ENCODE measurements at regions of chr5 and their contacts with region 1.

Region 1: DNA sequence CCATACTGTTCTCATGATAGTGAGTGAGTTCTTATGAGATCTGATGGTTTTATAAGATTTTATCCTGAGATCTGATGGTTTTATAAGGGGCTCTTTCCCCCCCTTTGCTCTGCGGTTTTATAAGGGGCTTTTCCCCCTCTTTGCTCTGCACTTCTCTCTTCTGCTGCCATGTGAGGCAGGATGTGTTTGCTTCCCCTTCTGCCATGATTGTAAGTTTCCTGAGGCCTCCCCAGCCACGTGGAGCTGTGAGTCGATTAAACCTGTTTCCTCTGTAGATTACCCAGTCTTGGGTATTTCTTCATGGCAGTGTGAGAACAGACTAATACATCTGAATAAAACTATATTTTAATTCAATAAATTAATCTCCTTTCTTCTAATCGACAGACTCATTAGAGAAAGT is 64.9 kb upstream of the ZSWIM6 start:
- DNase-seq: no peak
- H3K4me3 ChIP-seq: no peak overlapping the region
- H3K4me3 Mint-ChIP-seq: no peak overlapping the region
- H3K27ac ChIP-seq: no peak overlapping the region
- H3K27ac Mint-ChIP-seq: no peak overlapping the region
- H3K4me1 ChIP-seq: peaks cover 9% of the 10 kb centered on the region
- H3K4me1 Mint-ChIP-seq: peaks cover 14 to 20% (median 16%) of the 10 kb centered on the region in 4 donors
- H3K27me3 ChIP-seq: no peaks in the 10 kb centered on the region
- H3K27me3 Mint-ChIP-seq: peaks cover 9 to 12% of the 10 kb centered on the region in 2 donors

Region 2: GRCh38 chr5:60820593-60821487 is 446.3 kb before region 1 on chr5:
- CTCF ChIA-PET with region 1: no interaction called
- POLR2A ChIA-PET with region 1: no interaction called
- intact Hi-C with region 1: no loop called
- DNase-seq: no peak
- H3K4me3 ChIP-seq: no peak overlapping the region
- H3K4me3 Mint-ChIP-seq: no peak overlapping the region
- H3K27ac ChIP-seq: no peak overlapping the region
- H3K27ac Mint-ChIP-seq: no peak overlapping the region
- H3K4me1 ChIP-seq: no peaks in the 10 kb centered on the region
- H3K4me1 Mint-ChIP-seq: no peaks in the 10 kb centered on the region
- H3K27me3 ChIP-seq: no peaks in the 10 kb centered on the region
- H3K27me3 Mint-ChIP-seq: no peaks in the 10 kb centered on the region

Region 3: DNA sequence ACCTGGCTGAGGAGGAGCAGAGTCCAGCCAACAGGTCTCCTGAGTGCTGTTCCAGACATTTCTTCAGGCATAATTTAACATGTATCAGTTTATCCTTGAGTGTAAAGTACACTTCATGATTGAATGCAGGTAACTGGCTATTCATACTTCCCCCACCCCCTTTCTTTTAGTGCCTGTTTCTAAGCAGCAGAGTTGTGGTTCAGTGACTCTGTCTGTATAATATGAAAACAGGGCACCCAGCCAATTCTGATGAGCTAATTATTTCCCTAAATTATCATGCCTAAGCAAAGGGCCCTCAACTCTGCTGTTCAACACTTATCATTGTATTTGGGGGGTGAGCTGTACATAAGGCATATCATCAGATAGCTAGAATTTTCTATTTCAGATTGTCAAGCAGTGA is 13.1 kb after region 1 on chr5:
- CTCF ChIA-PET with region 1: interaction called, 10 read pairs
- POLR2A ChIA-PET with region 1: no interaction called
- intact Hi-C with region 1: no loop called
- DNase-seq: no peak
- H3K4me3 ChIP-seq: no peak overlapping the region
- H3K4me3 Mint-ChIP-seq: no peak overlapping the region
- H3K27ac ChIP-seq: no peak overlapping the region
- H3K27ac Mint-ChIP-seq: no peak overlapping the region
- H3K4me1 ChIP-seq: peaks cover 10% of the 10 kb centered on the region
- H3K4me1 Mint-ChIP-seq: peaks cover 17 to 33% (median 26%) of the 10 kb centered on the region in 4 donors
- H3K27me3 ChIP-seq: no peaks in the 10 kb centered on the region
- H3K27me3 Mint-ChIP-seq: no peaks in the 10 kb centered on the region

Measured in CD4-positive, alpha-beta memory T cell (primary cell).